PC-3 (cell line): ENCODE measurements at regions of chr9 and their contacts with region 1.

Region 1: GRCh38 chr9:12775679-12776512 is 1.1 kb downstream of the LURAP1L start:
- DNase-seq: peak; percentile 74
- ATAC-seq: peak; percentile 76
- H3K4me3 ChIP-seq: peak overlapping the region; percentile 86
- H3K27ac ChIP-seq: peak overlapping the region; percentile 92
- H3K4me1 ChIP-seq: peaks cover 25% of the 10 kb centered on the region
- H3K27me3 ChIP-seq: no peaks in the 10 kb centered on the region
- CTCF ChIP-seq: peak; percentile 59

Region 2: GRCh38 chr9:12748016-12748415 is 27.9 kb before region 1 on chr9:
- CTCF ChIA-PET with region 1: no interaction called
- POLR2A ChIA-PET with region 1: interaction called, 11 read pairs
- intact Hi-C with region 1: no loop called
- DNase-seq: peak; percentile 45
- ATAC-seq: peak; percentile 72
- H3K4me3 ChIP-seq: no peak overlapping the region
- H3K27ac ChIP-seq: peak overlapping the region; percentile 50
- H3K4me1 ChIP-seq: peaks cover 6% of the 10 kb centered on the region
- H3K27me3 ChIP-seq: no peaks in the 10 kb centered on the region
- CTCF ChIP-seq: no peak

Region 3: GRCh38 chr9:12759761-12760160 is 16.1 kb before region 1 on chr9:
- CTCF ChIA-PET with region 1: no interaction called
- POLR2A ChIA-PET with region 1: interaction called, 4 read pairs
- intact Hi-C with region 1: loop called (anchors 2 kb)
- DNase-seq: peak; percentile 84
- ATAC-seq: peak; percentile 88
- H3K4me3 ChIP-seq: no peak overlapping the region
- H3K27ac ChIP-seq: peak overlapping the region; percentile 82
- H3K4me1 ChIP-seq: peaks cover 29% of the 10 kb centered on the region
- H3K27me3 ChIP-seq: no peaks in the 10 kb centered on the region
- CTCF ChIP-seq: no peak

Region 4: DNA sequence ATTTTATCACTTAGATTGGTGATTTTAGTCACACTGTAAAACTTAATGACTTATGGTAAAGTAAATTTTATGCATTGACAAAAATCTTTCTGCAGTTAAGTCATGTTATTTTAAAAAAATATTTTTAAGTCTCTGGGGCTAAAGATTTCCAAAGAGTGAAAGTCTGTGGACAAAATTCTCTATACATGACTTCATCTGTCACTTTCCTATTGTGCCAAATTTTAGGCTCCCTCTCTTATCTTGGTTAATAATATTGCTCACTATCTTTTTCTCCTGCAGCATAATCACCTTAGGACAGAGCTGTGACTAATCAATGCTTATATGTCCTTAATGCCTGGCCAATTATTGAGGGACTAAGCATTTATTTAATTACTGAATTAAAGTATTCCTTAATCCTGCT is 14.1 kb after region 1 on chr9:
- CTCF ChIA-PET with region 1: no interaction called
- POLR2A ChIA-PET with region 1: no interaction called
- intact Hi-C with region 1: no loop called
- DNase-seq: no peak
- ATAC-seq: no peak
- H3K4me3 ChIP-seq: no peak overlapping the region
- H3K27ac ChIP-seq: no peak overlapping the region
- H3K4me1 ChIP-seq: peaks cover 19% of the 10 kb centered on the region
- H3K27me3 ChIP-seq: no peaks in the 10 kb centered on the region
- CTCF ChIP-seq: no peak